Left colon (tissue), 2 donors: ENCODE measurements at regions of chr13 and their contacts with region 1.

Region 1: DNA sequence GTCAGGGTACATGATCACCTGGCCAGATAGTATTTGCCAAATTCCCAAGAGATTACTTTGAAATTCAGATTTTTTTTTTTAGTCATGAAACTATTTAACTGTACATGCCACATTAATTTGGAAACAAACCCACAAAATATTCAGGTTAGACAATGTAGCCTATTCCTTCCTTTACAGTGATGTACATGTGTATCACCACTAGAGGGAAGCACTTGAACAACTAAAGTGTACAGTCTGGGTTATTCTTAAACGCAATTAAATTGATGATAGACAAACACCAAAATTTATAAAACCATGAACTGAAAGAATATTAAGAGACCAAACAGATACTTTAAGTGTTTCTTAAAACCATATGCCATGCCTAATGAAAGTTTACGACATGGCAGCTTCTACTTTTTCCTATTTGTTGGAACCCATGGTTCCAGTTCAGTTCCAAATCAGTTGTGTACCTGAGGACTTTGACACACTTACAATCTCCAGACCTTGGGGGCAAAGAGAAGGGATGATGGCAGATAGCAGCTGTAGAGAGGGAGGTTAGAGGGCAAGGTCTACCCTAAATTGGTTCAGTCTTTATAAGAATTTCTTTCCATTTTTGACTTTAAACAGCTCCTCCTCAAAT is 52.8 kb downstream of the TNFSF13B start:
- DNase-seq: no peak
- ATAC-seq: peak; percentile 64

Region 2: GRCh38 chr13:108020027-108020426 is 302.3 kb before region 1 on chr13:
- intact Hi-C with region 1: no loop called
- DNase-seq: no peak
- ATAC-seq: no peak

Region 3: DNA sequence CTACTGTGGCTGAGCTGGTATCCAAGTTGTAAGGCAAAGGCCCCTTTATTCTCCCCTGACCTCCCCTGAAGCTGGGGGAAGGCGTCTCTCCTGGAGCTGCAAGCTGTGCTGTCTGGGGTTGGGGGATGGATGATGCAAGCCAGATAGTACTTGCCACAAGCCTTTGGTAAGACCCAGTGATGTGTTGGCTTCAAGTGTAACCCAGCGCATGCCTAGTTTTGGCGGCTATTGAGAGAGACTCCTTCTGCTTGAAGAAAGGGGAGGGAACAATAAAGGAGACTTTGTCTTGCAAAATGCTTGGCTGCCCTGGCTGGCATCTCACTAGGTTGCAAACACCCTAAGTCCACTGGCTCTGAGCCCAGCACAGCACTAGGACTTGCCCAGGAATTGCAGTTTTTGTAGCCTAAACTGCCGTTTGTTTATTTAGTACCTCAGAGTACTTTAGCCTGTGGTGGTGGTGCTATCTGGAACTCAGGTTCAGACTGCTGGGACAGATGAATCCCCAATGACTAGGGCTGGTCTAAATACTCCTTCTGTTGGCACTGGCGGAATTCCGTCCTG is 55.4 kb after region 1 on chr13:
- intact Hi-C with region 1: no loop called
- DNase-seq: no peak
- ATAC-seq: no peak

Region 4: DNA sequence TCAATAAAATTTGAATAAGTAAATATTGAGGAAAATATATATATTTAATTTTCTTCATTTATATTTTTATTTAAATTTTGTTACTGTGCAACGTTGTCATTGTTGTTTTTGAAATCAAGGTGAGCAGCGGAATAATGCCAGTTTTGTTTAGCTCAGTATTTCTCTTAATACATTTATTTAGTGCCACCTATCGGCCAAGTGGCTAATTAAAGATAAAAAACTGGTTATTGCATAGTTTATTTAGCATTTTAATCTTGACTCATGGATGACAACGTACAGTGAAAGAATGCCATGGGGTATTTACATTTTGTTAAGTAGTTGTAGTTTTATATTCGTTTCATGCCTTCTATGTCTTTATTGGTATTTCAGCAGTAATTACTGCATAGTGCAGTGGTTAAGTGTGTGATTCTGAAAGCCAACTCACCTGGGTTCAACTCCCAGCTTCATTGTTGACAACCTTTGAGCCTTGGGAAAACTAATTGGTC is 572.9 kb after region 1 on chr13:
- intact Hi-C with region 1: loop called in 1 of 2 experiments (anchors 5 kb)
- DNase-seq: no peak
- ATAC-seq: no peak